SK-N-SH (cell line): ENCODE measurements at regions of chr3 and their contacts with region 1.

Region 1: GRCh38 chr3:114418724-114419543 is 125.1 kb downstream of the TIGIT start:
- DNase-seq: peak; percentile 48
- H3K4me3 ChIP-seq: no peak overlapping the region; a peak in 1 of 4 replicates
- H3K27ac ChIP-seq: no peak overlapping the region; a peak in 1 of 4 replicates
- H3K4me1 ChIP-seq: no peaks in the 10 kb centered on the region
- H3K27me3 ChIP-seq: no peaks in the 10 kb centered on the region
- CTCF ChIP-seq: peak; percentile 84
- EP300 ChIP-seq: no peak
- RAD21 ChIP-seq: peak; percentile 82

Region 2: GRCh38 chr3:113649174-113649845 is 769.6 kb before region 1 on chr3:
- CTCF ChIA-PET with region 1: no interaction called
- POLR2A ChIA-PET with region 1: no interaction called
- DNase-seq: no peak
- H3K4me3 ChIP-seq: no peak overlapping the region
- H3K27ac ChIP-seq: no peak overlapping the region
- H3K4me1 ChIP-seq: no peaks in the 10 kb centered on the region
- H3K27me3 ChIP-seq: no peaks in the 10 kb centered on the region
- CTCF ChIP-seq: no peak
- EP300 ChIP-seq: no peak
- RAD21 ChIP-seq: no peak

Region 3: GRCh38 chr3:114299421-114299820 is 119.5 kb before region 1 on chr3:
- CTCF ChIA-PET with region 1: no interaction called
- POLR2A ChIA-PET with region 1: no interaction called
- DNase-seq: peak; percentile 57
- H3K4me3 ChIP-seq: no peak overlapping the region
- H3K27ac ChIP-seq: no peak overlapping the region
- H3K4me1 ChIP-seq: no peaks in the 10 kb centered on the region; a peak in 1 of 4 replicates
- H3K27me3 ChIP-seq: no peaks in the 10 kb centered on the region; the same call in 1 of the 2 replicates
- CTCF ChIP-seq: peak; percentile 54
- EP300 ChIP-seq: no peak
- RAD21 ChIP-seq: peak; percentile 42

Region 4: GRCh38 chr3:114375608-114376421 is 43.1 kb before region 1 on chr3:
- CTCF ChIA-PET with region 1: interaction called, 248 read pairs
- POLR2A ChIA-PET with region 1: no interaction called
- DNase-seq: no peak
- H3K4me3 ChIP-seq: no peak overlapping the region
- H3K27ac ChIP-seq: no peak overlapping the region
- H3K4me1 ChIP-seq: peaks cover 3 to 17% of the 10 kb centered on the region in 2 experiments; a peak in 2 of 4 replicates
- H3K27me3 ChIP-seq: no peaks in the 10 kb centered on the region
- CTCF ChIP-seq: no peak
- EP300 ChIP-seq: no peak
- RAD21 ChIP-seq: no peak

Region 5: DNA sequence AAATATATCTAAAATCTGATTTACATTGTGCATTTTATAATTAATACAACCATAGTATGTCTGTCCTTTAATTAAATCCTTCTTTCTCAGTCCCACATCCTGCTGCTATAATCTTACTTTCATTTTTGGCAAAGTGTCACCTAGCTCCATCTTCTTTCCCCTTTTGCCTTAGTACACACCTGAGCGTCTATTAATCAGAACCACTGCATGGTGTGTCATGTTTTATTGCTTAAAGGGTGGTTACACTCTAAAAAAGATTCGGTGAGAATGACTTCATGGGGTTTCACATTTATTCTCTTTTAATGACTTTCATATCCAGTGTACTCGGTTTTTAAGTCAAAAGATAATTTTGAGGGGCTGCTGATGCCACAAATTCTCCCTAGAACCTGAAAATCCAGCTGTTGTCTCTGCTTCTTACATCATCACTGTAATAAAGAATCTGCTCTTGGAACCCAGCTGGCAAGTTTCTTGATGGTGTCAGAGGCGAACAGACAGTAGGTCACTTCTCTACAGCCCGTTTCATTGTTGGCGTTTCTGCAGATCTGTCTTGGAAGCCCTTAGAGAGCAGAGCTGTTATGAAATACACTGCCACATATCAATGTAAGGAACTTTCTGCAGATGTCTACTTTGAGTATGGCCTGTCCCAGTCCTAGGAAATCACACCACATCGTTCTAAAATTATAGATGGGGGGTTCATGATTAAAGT is 25.4 kb before region 1 on chr3:
- CTCF ChIA-PET with region 1: interaction called, 85 read pairs
- POLR2A ChIA-PET with region 1: no interaction called
- DNase-seq: no peak
- H3K4me3 ChIP-seq: no peak overlapping the region
- H3K27ac ChIP-seq: no peak overlapping the region
- H3K4me1 ChIP-seq: no peaks in the 10 kb centered on the region
- H3K27me3 ChIP-seq: no peaks in the 10 kb centered on the region
- CTCF ChIP-seq: no peak
- EP300 ChIP-seq: no peak
- RAD21 ChIP-seq: no peak

Region 6: GRCh38 chr3:114435386-114436115 is 16.6 kb after region 1 on chr3:
- CTCF ChIA-PET with region 1: interaction called, 20 read pairs
- POLR2A ChIA-PET with region 1: no interaction called
- DNase-seq: no peak
- H3K4me3 ChIP-seq: no peak overlapping the region
- H3K27ac ChIP-seq: no peak overlapping the region; a peak in 1 of 4 replicates
- H3K4me1 ChIP-seq: peaks cover 2 to 25% of the 10 kb centered on the region in 2 experiments; a peak in 2 of 4 replicates
- H3K27me3 ChIP-seq: no peaks in the 10 kb centered on the region
- CTCF ChIP-seq: no peak
- EP300 ChIP-seq: no peak
- RAD21 ChIP-seq: no peak

Region 7: GRCh38 chr3:114454551-114455251 is 35.8 kb after region 1 on chr3:
- CTCF ChIA-PET with region 1: interaction called, 11 read pairs
- POLR2A ChIA-PET with region 1: interaction called, 3 read pairs
- DNase-seq: peak; percentile 23
- H3K4me3 ChIP-seq: peak overlapping the region; percentile 51 to 58; a peak in 3 of 4 replicates
- H3K27ac ChIP-seq: peak overlapping the region in 1 of 2 experiments; percentile 35; a peak in 1 of 4 replicates
- H3K4me1 ChIP-seq: peaks cover 8 to 27% of the 10 kb centered on the region in 2 experiments; a peak in 2 of 4 replicates
- H3K27me3 ChIP-seq: no peaks in the 10 kb centered on the region
- CTCF ChIP-seq: no peak
- EP300 ChIP-seq: no peak
- RAD21 ChIP-seq: no peak